ENCODE measurements at regions of chr17 and their contacts with region 1.

Region 1: GRCh38 chr17:7931709-7932482 is at the starts of genes CNTROB and TRAPPC1:
- DNase-seq: peak; percentile 96
- ATAC-seq: peak; percentile 95
- H3K4me3 ChIP-seq: peak within 1 kb of the TSS; percentile 97 to 99
- H3K27ac ChIP-seq: peak within 1 kb of the TSS; percentile 98
- H3K4me1 ChIP-seq: peaks cover 6% of the 10 kb centered on the region
- H3K27me3 ChIP-seq: no peaks in the 10 kb centered on the region
- CTCF ChIP-seq: no peak
- total RNA-seq, gene CNTROB: 60.5 TPM
- total RNA-seq, gene TRAPPC1: 154 TPM

Region 2: DNA sequence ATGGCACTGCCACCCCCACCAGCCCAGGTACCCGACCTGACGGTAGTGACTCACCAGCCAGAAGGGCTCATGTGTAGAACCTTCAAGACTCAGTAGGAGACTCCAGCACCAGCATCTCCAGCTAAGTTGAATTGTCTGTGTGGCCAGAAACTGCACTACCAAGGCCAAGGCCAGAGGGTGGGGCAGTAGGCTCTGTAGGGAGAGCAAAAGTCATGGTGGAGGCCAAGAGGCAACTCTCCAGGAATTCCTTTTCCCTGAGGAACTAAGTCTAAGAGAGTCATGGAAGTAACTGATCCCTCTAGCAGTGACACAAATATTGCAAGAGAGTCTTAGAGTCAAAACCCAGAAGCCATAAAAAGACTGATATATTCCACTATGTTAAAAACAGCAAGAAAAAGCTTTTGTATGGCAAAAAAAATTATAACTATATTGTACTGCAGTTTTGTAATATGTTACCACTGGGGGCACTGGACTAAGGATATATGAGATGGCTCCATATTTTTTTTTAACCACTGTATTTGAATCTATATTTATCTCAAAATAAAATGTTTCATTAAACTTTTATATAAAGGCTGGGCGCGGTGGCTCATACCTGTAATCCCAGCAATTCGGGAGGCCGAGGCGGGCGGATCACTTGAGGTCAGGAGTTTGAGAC is 40.4 kb after region 1 on chr17:
- CTCF ChIA-PET with region 1: interaction called, 4 read pairs
- POLR2A ChIA-PET with region 1: no interaction called
- in situ Hi-C with region 1: no loop called
- intact Hi-C with region 1: loop called (anchors 2 kb)
- DNase-seq: no peak
- ATAC-seq: no peak
- H3K4me3 ChIP-seq: no peak overlapping the region
- H3K27ac ChIP-seq: no peak overlapping the region
- H3K4me1 ChIP-seq: no peaks in the 10 kb centered on the region
- H3K27me3 ChIP-seq: no peaks in the 10 kb centered on the region
- CTCF ChIP-seq: no peak

Measured in Panc1 (cell line).